K562 (cell line): ENCODE measurements at regions of chr2 and their contacts with region 1.

Region 1: GRCh38 chr2:152627351-152627957 is 89.8 kb downstream of the PRPF40A start:
- DNase-seq: peak in 3 of 4 experiments; percentile 30 to 38 (median 33)
- ATAC-seq: peak; percentile 83
- H3K4me3 ChIP-seq: no peak overlapping the region
- H3K27ac ChIP-seq: no peak overlapping the region
- H3K4me1 ChIP-seq: no peaks in the 10 kb centered on the region; a peak in 1 of 5 replicates
- H3K27me3 ChIP-seq: peaks cover 9 to 11% of the 10 kb centered on the region in 2 experiments; a peak in 4 of 5 replicates
- CTCF ChIP-seq: peak; percentile 43 to 73 (median 57); a peak in 4 of 6 replicates
- EP300 ChIP-seq: no peak
- POLR2A ChIP-seq: no peak
- RAD21 ChIP-seq: peak; percentile 86 to 91

Region 2: DNA sequence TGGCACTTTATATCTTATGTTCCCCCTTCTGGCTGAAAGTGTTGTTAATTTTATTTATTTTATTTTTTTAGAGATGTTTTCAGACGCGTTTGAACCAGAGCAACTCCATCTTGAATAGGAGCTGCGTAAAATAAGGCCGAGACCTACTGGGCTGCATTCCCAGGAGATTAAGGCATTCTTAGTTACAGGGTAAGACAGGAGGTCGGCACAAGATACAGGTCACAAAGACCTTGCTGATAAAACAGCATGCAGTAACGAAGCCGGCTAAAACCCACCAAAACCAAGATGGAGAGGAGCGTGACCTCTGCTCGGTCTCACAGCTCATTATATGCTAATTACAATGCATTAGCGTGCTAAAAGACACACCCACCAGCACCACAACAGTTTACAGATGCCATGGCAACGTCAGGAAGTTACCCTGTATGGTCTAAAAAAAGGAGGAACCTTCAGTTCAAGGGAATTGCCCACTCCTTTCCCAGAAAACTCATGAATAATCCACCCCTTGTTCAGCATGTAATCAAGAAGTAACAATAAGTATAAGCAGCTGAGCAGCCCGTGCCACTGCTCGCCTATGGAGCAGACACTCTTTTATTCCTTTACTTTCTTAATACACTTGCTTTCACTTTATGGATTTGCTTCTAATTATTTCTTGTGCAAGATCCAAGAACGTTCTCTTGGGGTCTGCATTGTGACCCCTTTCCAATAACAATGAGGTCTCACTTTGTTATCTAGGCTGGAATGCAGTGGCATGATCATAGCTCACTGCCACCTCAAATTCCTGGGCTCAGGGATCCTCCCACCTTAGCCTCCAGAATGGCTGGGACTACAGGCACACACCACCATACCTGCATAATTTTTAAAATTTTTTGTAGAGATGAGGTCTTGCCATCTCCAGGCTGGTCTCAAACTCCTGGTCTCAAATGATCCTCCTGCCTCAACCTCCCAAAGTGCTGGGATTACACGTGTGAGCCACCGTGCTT is 584.5 kb before region 1 on chr2:
- CTCF ChIA-PET with region 1: no interaction called
- POLR2A ChIA-PET with region 1: no interaction called
- in situ Hi-C with region 1: loop called (anchors 5 kb)
- intact Hi-C with region 1: no loop called
- DNase-seq: peak in 1 of 4 experiments; percentile 21
- ATAC-seq: peak; percentile 57
- H3K4me3 ChIP-seq: no peak overlapping the region
- H3K27ac ChIP-seq: no peak overlapping the region
- H3K4me1 ChIP-seq: no peaks in the 10 kb centered on the region; a peak in 1 of 5 replicates
- H3K27me3 ChIP-seq: peaks cover 10 to 13% of the 10 kb centered on the region in 2 experiments; a peak in 3 of 5 replicates
- CTCF ChIP-seq: no peak
- EP300 ChIP-seq: no peak
- POLR2A ChIP-seq: no peak
- RAD21 ChIP-seq: no peak

Region 3: DNA sequence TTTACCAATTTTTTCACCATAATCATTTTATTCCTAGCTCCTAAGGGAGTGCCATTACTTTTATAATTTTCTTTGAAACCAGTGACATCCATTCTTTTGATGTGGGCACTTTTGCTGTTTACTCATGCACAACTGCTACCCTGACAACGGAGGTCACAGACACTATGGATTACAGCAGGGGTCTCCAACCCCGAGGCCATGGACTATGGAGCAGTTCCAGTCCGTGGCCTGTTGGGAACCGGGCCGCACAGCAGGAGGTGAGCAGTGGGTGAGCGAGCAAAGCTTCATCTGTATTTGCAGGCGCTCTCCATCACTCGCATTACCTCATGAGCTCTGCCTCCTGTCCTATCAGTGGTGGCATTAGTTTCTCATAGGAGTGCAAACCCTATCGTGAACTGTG is 55.2 kb after region 1 on chr2:
- CTCF ChIA-PET with region 1: no interaction called
- POLR2A ChIA-PET with region 1: no interaction called
- in situ Hi-C with region 1: no loop called
- intact Hi-C with region 1: no loop called
- DNase-seq: no peak
- ATAC-seq: no peak
- H3K4me3 ChIP-seq: no peak overlapping the region
- H3K27ac ChIP-seq: no peak overlapping the region
- H3K4me1 ChIP-seq: no peaks in the 10 kb centered on the region
- H3K27me3 ChIP-seq: no peaks in the 10 kb centered on the region
- CTCF ChIP-seq: no peak
- EP300 ChIP-seq: no peak
- POLR2A ChIP-seq: no peak
- RAD21 ChIP-seq: no peak